Heart right ventricle (tissue), 16 donors: ENCODE measurements at regions of chr5 and their contacts with region 1.

Region 1: GRCh38 chr5:16456103-16456832 is 9.3 kb downstream of the ZNF622 start:
- DNase-seq: no peak
- ATAC-seq: peak; percentile 17 to 73 (median 52)
- H3K4me3 ChIP-seq: no peak overlapping the region
- H3K27ac ChIP-seq: peak overlapping the region in 8 of 10 donors; percentile 5 to 63 (median 22)
- H3K4me1 ChIP-seq: peaks cover 3 to 86% (median 49%) of the 10 kb centered on the region in 9 donors
- H3K27me3 ChIP-seq: no peaks in the 10 kb centered on the region
- CTCF ChIP-seq: peak; percentile 31 to 77 (median 70)

Region 2: DNA sequence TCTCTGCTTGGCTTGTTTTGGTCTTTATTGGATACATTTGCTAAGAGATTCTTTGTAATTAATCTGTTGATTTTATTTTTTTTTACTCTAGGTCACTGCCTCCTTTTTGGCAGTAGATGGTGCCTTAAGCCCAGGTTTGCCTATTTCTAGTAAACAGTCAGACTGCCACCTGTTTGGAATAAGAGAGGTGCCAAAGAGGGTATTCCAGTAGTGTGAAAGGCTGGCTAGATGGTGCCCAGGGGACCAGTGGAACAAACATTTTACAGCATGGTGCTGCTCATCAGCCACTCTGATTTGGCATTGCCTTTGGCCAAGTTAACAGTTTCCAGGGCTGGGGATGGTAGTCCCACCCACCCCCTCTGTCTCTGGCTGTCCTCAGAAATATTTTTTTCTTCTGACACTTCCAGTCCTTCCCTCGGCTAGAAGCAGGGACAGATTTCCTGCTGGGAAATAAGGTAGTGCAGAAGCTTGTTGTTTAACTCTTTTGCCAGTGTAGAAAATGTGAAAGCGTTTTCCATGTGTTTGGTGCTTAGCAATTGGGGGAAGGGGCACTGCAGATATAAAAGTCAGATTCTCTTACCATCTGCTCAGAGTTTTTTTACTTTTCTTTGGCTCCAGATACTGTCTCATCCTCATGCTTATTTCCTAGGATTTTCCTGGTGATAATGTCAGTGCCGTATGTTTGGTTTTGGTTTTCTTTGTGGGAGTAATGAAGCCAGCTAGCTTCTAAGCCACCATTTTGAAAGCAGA is 992.9 kb before region 1 on chr5:
- intact Hi-C with region 1: loop called in 1 of 10 experiments (anchors 5 kb)
- DNase-seq: no peak
- ATAC-seq: peak in 2 of 8 donors; percentile 33 to 42
- H3K4me3 ChIP-seq: no peak overlapping the region
- H3K27ac ChIP-seq: no peak overlapping the region
- H3K4me1 ChIP-seq: no peaks in the 10 kb centered on the region
- H3K27me3 ChIP-seq: no peaks in the 10 kb centered on the region
- CTCF ChIP-seq: peak in 8 of 9 donors; percentile 41 to 68 (median 52)

Region 3: DNA sequence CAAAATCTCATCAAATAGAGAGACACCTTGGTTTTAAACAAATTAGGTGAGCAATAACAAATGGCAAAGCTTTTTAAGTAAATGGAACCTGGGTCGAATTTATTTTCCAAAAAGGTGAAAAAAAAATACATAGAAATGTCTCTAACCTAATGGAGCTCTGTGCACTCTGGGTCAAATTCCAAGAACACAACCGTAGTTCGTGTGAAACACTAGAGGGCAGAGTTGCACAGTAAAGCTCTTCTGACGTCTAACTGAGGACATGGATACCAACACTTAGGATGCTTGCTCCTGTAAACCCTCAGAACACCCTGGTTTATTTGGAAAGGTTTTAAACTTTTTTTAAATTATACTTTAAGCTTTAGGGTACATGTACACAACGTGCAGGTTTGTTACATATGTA is 295.6 kb before region 1 on chr5:
- intact Hi-C with region 1: loop called in 9 of 10 experiments (anchors 2 to 10 kb)
- DNase-seq: peak in 1 of 2 donors; percentile 9
- ATAC-seq: peak in 7 of 8 donors; percentile 55 to 84 (median 73)
- H3K4me3 ChIP-seq: no peak overlapping the region
- H3K27ac ChIP-seq: no peak overlapping the region
- H3K4me1 ChIP-seq: no peaks in the 10 kb centered on the region
- H3K27me3 ChIP-seq: no peaks in the 10 kb centered on the region
- CTCF ChIP-seq: peak; percentile 36 to 75 (median 65)

Region 4: DNA sequence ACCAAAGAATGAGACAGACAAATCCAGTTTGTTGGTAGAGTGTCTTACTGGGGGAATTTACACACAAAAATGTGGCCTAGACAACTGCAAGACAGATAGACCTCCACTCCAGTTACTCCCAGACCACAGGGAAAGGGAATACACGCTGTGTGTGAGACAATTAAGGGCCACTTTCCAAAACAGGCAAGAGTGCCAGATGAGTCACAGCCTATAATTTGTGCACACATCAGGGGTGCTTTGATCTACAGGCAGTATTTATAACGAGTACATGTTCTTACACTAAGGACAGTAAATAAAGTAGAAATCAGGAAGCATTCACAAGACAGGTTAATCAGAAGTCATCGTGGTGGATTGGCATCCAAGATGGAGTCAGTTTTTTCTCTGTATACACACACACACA is 105.5 kb before region 1 on chr5:
- intact Hi-C with region 1: loop called in 1 of 10 experiments (anchors 10 kb)
- DNase-seq: peak in 1 of 2 donors; percentile 9
- ATAC-seq: peak in 6 of 8 donors; percentile 46 to 90 (median 70)
- H3K4me3 ChIP-seq: no peak overlapping the region
- H3K27ac ChIP-seq: no peak overlapping the region
- H3K4me1 ChIP-seq: no peaks in the 10 kb centered on the region
- H3K27me3 ChIP-seq: no peaks in the 10 kb centered on the region
- CTCF ChIP-seq: no peak

Region 5: DNA sequence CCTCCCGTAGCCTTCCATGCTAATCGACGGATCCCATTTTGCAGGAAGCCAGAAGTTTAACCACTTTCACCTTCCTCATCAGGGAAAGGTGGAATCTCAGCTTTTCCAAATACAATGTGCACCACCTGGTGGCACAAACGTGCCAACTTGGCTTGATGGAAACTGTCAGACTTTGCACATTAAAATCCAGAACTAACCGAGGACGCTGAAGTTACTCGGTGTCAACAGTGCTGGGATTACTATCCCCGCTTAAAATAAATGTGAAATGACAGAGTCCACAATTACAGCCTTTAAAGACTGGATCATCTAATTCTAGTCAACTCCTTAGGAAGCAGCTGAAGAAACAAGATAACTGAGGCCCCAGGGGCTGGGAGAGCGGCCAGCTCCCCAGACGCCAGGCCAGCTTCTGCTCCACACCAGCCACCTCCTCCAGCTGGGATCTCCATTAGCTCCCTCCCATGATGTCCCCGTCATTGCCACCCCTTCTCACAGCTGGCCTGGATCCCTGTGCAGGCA is 210.7 kb after region 1 on chr5:
- intact Hi-C with region 1: loop called in 1 of 10 experiments (anchors 5 kb)
- DNase-seq: peak; percentile 58 to 60
- ATAC-seq: peak; percentile 73 to 91 (median 80)
- H3K4me3 ChIP-seq: peak overlapping the region in 3 of 10 donors; percentile 11 to 17 (median 15)
- H3K27ac ChIP-seq: peak overlapping the region in 8 of 10 donors; percentile 23 to 74 (median 52)
- H3K4me1 ChIP-seq: peaks cover 0 to 44% (median 26%) of the 10 kb centered on the region in 9 donors
- H3K27me3 ChIP-seq: no peaks in the 10 kb centered on the region
- CTCF ChIP-seq: peak; percentile 19 to 62 (median 45)